Psoas muscle (tissue), 8 donors: ENCODE measurements at regions of chr9 and their contacts with region 1.

Region 1: GRCh38 chr9:77534376-77535057 is 113.6 kb downstream of the GNA14 start:
- DNase-seq: no peak
- ATAC-seq: no peak
- H3K4me3 ChIP-seq: no peak overlapping the region
- H3K27ac ChIP-seq: no peak overlapping the region
- H3K4me1 ChIP-seq: no peaks in the 10 kb centered on the region
- H3K27me3 ChIP-seq: no peaks in the 10 kb centered on the region
- CTCF ChIP-seq: no peak

Region 2: GRCh38 chr9:77598524-77598923 is 64.0 kb after region 1 on chr9:
- intact Hi-C with region 1: loop called in 1 of 2 experiments (anchors 10 kb)
- DNase-seq: no peak
- ATAC-seq: peak in 2 of 4 donors; percentile 28 to 30
- H3K4me3 ChIP-seq: no peak overlapping the region
- H3K27ac ChIP-seq: no peak overlapping the region
- H3K4me1 ChIP-seq: peaks cover 5% of the 10 kb centered on the region
- H3K27me3 ChIP-seq: peaks cover 0 to 4% (median 0%) of the 10 kb centered on the region in 3 donors
- CTCF ChIP-seq: no peak